ENCODE measurements at regions of chr15 and their contacts with region 1.

Region 1: DNA sequence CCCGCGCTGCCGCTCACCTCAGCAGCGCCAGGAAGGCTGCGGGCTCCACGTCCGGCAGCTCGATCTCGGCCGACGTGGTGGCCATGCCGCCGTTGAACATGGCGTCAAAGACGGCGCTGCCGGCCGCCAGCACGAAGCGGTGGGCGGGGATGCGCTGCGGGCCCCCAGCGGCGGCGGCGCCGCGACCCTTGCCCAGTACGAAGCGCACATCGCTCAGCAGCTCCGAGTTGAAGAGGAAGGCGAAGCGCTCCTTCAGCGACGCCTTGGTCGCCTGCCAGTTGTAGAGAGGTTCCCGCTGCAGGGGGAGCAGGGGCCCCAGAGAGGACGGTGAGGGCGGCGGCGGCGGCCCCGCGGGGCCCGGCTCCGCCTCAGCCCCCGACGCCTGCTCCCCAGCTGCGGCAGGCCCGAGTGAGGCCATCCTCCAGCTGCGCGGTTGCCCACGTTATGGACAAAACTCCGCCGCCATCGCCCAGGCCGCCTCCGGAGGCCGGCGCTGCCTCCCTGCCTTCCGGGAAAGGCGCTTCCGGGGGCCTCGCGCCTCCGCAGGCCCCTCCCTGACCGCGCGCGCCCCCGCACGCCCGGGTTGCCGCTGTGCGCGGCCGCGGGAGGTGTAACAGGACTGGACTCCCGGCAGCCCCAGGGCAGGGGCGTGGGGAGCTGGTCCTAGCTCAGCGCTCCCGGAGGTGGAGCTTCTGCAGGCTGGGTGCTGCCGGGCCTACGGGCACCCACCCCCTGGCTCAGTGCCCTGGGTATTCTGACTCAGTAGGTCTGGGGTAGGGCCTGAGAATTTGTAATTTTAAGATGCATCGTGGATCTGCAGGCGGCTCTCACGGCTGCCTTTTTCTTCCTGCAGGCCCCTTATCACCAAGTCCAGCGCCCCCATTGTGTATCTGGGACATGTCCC is at the start of gene BTBD1:
- DNase-seq: peak; percentile 94

Region 2: GRCh38 chr15:82855286-82856100 is 211.5 kb before region 1 on chr15:
- CTCF ChIA-PET with region 1: no interaction called
- POLR2A ChIA-PET with region 1: no interaction called
- DNase-seq: no peak

Region 3: DNA sequence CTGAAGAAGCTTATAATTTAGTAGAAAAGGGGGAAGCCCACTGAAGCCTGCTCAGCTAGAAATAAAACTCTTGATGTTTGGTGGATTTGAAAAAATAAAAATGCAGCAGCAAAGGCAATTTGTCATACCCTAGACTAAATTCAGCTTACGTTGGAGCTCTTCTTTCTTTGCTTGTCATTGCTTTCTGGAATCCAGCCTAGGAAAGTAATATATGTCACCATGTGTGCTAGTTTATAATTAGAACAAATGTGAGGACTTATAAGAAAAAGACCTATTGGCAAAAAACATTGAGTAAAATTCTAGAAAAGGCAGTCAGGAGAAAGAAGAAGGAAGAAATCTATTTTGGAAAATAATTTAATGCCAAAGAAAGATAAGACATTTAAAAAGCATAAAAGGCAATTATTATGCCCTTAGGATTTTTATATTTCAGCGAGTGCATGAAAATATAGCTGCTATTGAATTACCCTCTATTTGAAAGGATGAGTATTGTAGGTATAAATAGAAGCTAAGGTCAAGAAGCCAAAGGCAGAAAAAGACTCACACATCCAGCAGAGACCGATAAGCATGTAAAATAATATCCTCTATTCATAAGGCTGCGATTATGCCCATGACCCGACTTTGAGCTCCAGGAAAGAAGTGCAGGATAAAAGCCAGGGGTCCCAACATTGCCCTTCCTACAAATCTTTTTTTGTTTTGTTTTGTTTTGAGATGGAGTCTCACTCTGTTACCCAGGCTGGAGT is 10.7 kb after region 1 on chr15:
- CTCF ChIA-PET with region 1: no interaction called
- POLR2A ChIA-PET with region 1: interaction called, 14 read pairs
- DNase-seq: no peak

Region 4: GRCh38 chr15:83144189-83144588 is 77.2 kb after region 1 on chr15:
- CTCF ChIA-PET with region 1: no interaction called
- POLR2A ChIA-PET with region 1: no interaction called
- DNase-seq: no peak

Region 5: DNA sequence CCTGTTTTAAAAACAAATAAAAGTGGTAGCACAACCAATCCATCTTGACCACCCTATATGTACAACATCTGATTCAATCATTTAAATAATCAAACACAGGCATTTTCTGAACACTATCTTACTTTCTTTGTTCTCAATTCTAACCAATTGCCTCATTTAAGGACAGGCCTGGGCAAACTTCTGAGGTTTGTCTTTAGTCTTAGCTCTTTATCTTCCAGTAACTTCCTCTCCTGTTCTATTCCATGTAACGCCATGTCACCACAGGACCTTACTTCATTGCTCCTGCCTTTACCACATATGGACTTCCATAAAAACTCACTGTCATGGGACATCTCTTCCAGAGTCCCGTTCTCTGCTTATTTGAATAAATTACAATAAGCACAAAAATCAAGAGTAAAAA is 125.8 kb after region 1 on chr15:
- CTCF ChIA-PET with region 1: no interaction called
- POLR2A ChIA-PET with region 1: no interaction called
- DNase-seq: no peak